ENCODE measurements at regions of chr1 and their contacts with region 1.

Region 1: DNA sequence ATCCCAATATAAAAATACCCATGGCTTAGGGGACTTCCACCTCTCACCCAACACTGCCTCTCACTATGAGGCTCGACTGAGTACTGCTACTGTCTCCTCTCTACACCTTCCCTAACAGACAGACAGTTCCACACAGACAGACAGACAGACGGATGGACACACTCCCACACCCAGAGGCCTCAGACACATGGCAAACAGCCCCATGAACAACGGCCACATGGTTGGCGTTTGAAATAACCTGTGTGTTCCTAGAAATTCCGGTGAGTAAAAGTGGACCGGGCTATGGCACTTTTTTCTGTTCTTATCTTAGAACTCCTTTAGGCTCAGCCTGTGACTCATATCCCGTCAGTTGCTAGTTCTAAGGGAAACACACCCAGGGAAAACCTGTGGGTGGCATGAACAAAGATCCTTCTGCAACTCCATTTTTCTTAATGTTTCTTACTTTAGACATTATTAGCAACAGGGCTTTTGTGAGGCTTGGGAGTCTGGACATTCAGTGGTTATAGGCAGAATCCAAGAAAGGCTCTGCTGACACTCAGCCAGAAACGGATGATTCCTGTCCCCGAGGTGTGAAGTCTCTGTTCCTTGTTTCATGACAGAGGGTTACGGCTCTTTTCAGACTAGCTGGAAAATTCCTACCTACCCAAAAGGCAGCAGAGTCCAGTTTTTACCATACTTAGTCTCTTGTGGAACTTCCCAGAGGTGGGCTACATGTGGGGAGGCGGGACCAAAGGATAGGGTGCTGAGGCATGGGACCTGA is 90.5 kb upstream of the TLR5 start:
- DNase-seq: peak in 1 of 9 donors; percentile 18
- ATAC-seq: no peak
- H3K4me3 ChIP-seq: no peak overlapping the region
- H3K4me3 Mint-ChIP-seq: peak overlapping the region in 5 of 10 donors; percentile 4 to 58 (median 24)
- H3K27ac ChIP-seq: peak overlapping the region; percentile 27
- H3K27ac Mint-ChIP-seq: peak overlapping the region in 8 of 9 donors; percentile 19 to 99 (median 80)
- H3K4me1 ChIP-seq: peaks cover 8 to 64% of the 10 kb centered on the region in 2 donors
- H3K4me1 Mint-ChIP-seq: peaks cover 18 to 82% (median 74%) of the 10 kb centered on the region in 7 donors
- H3K27me3 ChIP-seq: no peaks in the 10 kb centered on the region
- H3K27me3 Mint-ChIP-seq: peaks cover 0 to 4% (median 0%) of the 10 kb centered on the region in 5 donors

Region 2: DNA sequence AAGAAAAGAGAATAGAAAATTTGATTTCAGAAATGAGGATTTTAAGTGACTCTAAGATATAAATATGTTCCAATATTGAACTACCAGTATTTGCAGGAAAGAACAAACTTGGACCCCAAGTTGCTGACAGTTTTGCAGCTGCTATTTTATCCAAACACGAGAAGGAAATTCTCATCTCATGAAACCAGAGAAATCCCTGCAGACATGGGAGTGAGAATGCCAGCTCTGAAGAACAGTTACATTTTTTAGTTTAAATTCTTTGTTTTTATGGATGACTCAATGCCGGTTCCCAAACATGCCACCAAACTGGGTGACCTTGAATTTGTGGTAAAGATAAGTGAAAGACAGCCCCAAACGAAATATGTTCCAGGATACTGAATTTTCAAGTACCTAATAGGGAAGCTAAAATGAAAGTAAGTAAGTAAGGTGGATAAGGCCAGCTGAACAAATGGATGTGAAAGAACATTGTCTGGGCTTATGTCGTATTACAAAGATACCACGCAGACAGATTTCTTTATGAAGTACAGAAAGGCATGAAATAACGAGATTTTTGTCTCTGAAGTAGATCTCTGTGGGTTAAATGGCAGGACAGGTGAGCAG is 110.5 kb before region 1 on chr1:
- CTCF ChIA-PET with region 1: no interaction called
- POLR2A ChIA-PET with region 1: no interaction called
- intact Hi-C with region 1: no loop called
- DNase-seq: no peak
- ATAC-seq: no peak
- H3K4me3 ChIP-seq: peak overlapping the region; percentile 39
- H3K4me3 Mint-ChIP-seq: peak overlapping the region; percentile 48 to 90 (median 66)
- H3K27ac ChIP-seq: no peak overlapping the region
- H3K27ac Mint-ChIP-seq: peak overlapping the region in 1 of 9 donors; percentile 23
- H3K4me1 ChIP-seq: peaks cover 0 to 5% of the 10 kb centered on the region in 2 donors
- H3K4me1 Mint-ChIP-seq: peaks cover 0 to 11% (median 9%) of the 10 kb centered on the region in 7 donors
- H3K27me3 ChIP-seq: no peaks in the 10 kb centered on the region
- H3K27me3 Mint-ChIP-seq: peaks cover 0 to 11% (median 0%) of the 10 kb centered on the region in 5 donors

Region 3: GRCh38 chr1:223189903-223190724 is 43.5 kb before region 1 on chr1:
- CTCF ChIA-PET with region 1: no interaction called
- POLR2A ChIA-PET with region 1: interaction called, 4 read pairs
- intact Hi-C with region 1: loop called in 1 of 2 experiments (anchors 2 kb)
- DNase-seq: peak in 7 of 9 donors; percentile 5 to 57 (median 13)
- ATAC-seq: peak; percentile 79
- H3K4me3 ChIP-seq: no peak overlapping the region
- H3K4me3 Mint-ChIP-seq: peak overlapping the region; percentile 8 to 76 (median 62)
- H3K27ac ChIP-seq: no peak overlapping the region
- H3K27ac Mint-ChIP-seq: peak overlapping the region; percentile 25 to 90 (median 61)
- H3K4me1 ChIP-seq: peaks cover 9 to 29% of the 10 kb centered on the region in 2 donors
- H3K4me1 Mint-ChIP-seq: peaks cover 10 to 70% (median 63%) of the 10 kb centered on the region in 7 donors
- H3K27me3 ChIP-seq: no peaks in the 10 kb centered on the region
- H3K27me3 Mint-ChIP-seq: peaks cover 0 to 17% (median 0%) of the 10 kb centered on the region in 5 donors

Measured in naive thymus-derived CD4-positive, alpha-beta T cell (primary cell).